Body of pancreas (tissue), 4 donors: ENCODE measurements at regions of chr19 and their contacts with region 1.

Region 1: DNA sequence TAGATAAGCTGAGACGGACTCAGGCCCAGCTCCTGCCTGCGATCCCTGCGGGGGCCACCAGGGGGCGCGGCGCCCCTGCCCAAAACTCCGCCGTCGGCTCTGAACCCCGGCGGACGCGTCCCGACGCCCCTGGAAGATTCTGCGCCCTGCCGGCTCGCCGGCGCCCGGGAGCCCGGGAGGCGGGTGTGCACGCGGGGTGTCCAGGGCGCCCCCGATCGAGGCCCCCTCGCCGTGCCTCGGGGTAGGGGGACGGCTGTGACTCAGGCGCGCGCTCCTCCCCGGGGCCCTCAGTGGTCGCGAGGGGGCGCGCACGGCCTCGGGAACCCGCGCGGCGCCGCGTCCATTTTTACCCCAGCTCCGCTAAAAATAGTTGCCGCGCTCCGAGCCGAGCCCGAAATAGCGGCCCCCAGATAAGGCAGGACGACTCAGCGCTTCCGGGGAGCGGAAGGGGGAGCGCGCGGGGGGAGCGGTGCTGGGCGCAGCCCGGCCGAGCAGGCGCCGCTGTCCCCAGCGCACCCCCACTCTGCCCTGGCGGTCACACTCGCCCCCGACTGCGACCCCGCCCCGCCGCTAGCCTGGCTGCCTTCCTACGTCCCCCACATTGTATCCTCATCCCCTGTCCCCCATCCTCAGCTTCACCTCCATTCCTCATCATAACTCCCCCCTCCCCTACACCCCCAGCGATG is 16.0 kb upstream of the ERCC1 start:
- DNase-seq: peak; percentile 78 to 85 (median 82)
- ATAC-seq: peak; percentile 57
- H3K4me3 ChIP-seq: peak overlapping the region; percentile 30 to 63
- H3K27ac ChIP-seq: peak overlapping the region; percentile 63 to 91 (median 88)
- H3K4me1 ChIP-seq: peaks cover 23% of the 10 kb centered on the region
- H3K27me3 ChIP-seq: no peaks in the 10 kb centered on the region
- CTCF ChIP-seq: peak; percentile 96 to 100 (median 98)
- POLR2A ChIP-seq: peak in 2 of 3 donors; percentile 5 to 27

Region 2: DNA sequence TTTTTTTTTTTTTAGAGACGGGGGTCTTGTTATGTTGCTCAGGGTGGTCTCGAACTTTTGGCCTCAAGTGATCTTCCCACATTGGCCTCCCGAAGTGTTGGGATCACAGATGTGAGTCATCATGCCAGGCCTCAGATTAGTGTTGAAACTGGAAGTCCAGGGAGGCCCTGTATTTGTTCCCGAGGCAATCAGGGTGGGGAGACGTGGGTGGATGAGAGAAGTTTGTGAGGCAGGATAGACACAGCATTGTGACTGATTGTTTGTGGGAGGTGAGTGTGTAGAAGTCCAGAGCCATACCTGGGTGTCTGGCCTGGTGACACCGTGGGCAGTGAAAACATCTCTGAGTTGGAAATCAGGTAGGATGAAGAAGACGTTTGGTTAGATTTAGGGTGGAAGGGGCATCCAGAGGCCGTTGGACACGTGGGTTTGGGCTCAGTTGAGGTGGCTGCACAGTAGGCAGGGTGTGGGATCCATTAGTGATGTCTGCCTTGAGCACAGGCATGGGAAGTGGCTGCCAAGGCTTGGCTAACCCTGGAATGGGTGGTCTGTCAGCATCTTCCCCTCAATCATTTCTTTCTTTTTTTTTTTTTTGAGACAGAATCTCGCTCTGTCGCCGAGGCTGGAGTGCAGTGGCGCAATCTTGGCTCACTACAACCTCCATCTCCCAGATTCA is 44.7 kb after region 1 on chr19:
- intact Hi-C with region 1: loop called (anchors 5 kb)
- DNase-seq: no peak
- ATAC-seq: no peak
- H3K4me3 ChIP-seq: no peak overlapping the region
- H3K27ac ChIP-seq: no peak overlapping the region
- H3K4me1 ChIP-seq: peaks cover 4% of the 10 kb centered on the region
- H3K27me3 ChIP-seq: no peaks in the 10 kb centered on the region
- CTCF ChIP-seq: no peak
- POLR2A ChIP-seq: no peak